Tibial artery (tissue), 4 donors: ENCODE measurements at regions of chr9 and their contacts with region 1.

Region 1: GRCh38 chr9:89984214-89984613 is 379.4 kb downstream of the GADD45G start:
- DNase-seq: no peak
- H3K4me3 ChIP-seq: no peak overlapping the region
- H3K27ac ChIP-seq: no peak overlapping the region
- H3K4me1 ChIP-seq: peaks cover 0 to 11% (median 0%) of the 10 kb centered on the region in 4 donors
- H3K27me3 ChIP-seq: no peaks in the 10 kb centered on the region
- CTCF ChIP-seq: no peak

Region 2: DNA sequence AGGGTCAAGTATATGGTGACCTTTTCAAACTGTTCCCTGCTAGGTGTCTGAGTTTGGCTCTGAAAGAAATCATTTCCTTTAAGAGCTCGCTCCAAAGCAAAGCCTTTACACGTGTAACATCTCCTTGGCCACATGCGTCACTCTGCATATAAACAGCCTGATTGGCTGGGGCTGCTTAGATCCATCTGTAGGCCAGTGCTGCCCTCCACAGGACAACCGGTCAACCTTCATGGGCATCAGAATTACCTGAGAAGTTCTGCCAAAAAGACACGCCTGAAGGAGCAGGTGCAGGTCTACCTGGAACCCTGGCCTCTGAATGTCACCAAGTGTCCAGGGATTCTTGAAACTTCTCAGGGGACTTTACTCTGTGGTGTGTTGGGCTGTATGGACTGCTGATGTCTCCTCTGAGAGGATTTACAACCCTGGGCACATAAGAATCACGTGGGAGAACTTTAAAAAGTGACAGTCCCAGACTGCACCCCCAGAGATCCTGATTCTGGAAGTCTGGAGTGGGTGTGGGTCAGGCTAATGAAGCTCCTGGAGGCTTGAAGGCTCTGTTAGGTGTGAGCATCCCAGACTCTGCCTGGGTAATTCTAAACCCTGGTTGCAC is 118.2 kb after region 1 on chr9:
- intact Hi-C with region 1: loop called (anchors 10 kb)
- DNase-seq: peak; percentile 81 to 88
- H3K4me3 ChIP-seq: no peak overlapping the region
- H3K27ac ChIP-seq: no peak overlapping the region
- H3K4me1 ChIP-seq: peaks cover 0 to 4% (median 0%) of the 10 kb centered on the region in 4 donors
- H3K27me3 ChIP-seq: no peaks in the 10 kb centered on the region
- CTCF ChIP-seq: peak; percentile 77 to 91